Activated CD4-positive, alpha-beta memory T cell treated with anti-CD3 and anti-CD28 coated beads for 36 hours (primary cell): ENCODE measurements at regions of chr17 and their contacts with region 1.

Region 1: GRCh38 chr17:32915245-32915644 is 12.7 kb upstream of the TMEM98 start:
- DNase-seq: no peak
- H3K4me3 Mint-ChIP-seq: no peak overlapping the region
- H3K27ac Mint-ChIP-seq: no peak overlapping the region
- H3K4me1 Mint-ChIP-seq: peaks cover 41% of the 10 kb centered on the region
- H3K27me3 Mint-ChIP-seq: peaks cover 4% of the 10 kb centered on the region

Region 2: DNA sequence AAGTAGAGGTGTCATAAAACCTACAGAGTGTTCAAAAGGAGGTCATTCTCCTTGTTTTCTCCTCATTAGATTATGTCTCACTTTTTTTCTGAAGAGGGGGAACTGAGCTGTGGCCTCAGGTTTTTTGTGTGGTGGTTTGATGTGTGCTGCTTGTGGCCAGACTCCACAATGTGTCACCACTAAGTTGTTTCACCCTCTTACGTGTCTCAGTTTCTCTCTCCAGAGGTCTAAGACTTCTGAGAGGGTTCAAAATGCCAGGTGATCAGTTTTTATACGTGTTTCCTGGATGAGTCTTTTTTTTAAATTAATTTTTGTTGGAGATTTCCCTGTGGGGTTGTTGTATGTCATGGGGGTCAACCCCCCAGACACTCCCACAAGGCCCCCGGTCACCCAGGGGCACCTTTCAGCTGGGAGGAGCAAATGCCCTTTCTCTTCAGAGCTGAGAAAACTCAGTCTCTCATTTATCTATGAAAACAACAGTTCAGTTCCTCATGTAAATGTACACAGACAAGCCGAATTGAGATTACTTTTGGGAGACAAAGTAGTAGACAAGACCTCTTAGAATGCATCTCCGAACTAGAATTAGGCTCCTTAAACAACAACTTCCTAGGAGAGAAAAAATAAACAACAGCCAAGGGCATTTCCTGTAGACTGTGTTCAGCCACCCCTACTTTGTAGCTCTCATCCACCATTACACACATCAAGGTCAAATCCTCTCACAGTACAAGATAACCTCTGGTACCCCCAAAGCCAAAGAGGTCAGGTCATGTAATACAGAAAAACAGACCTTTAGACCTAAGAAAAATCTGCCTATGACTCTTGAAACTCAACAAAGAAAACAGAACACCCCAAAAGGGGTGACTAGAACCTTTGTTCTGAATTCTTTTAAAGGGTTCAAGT is 11.2 kb before region 1 on chr17:
- CTCF ChIA-PET with region 1: interaction called, 11 read pairs
- POLR2A ChIA-PET with region 1: interaction called, 3 read pairs
- intact Hi-C with region 1: loop called (anchors 1 kb)
- DNase-seq: peak; percentile 74
- H3K4me3 Mint-ChIP-seq: no peak overlapping the region
- H3K27ac Mint-ChIP-seq: peak overlapping the region; percentile 64
- H3K4me1 Mint-ChIP-seq: peaks cover 17% of the 10 kb centered on the region
- H3K27me3 Mint-ChIP-seq: peaks cover 22% of the 10 kb centered on the region